ENCODE measurements at regions of chr20 and their contacts with region 1.

Region 1: GRCh38 chr20:44866703-44867335 is 18.7 kb upstream of the YWHAB start:
- DNase-seq: no peak
- H3K4me3 ChIP-seq: no peak overlapping the region
- H3K27ac ChIP-seq: no peak overlapping the region
- H3K4me1 ChIP-seq: no peaks in the 10 kb centered on the region
- H3K27me3 ChIP-seq: 0 out of 2 replicates have a peak, but pooled peaks cover 17% of the 10 kb centered on the region
- CTCF ChIP-seq: no peak

Region 2: GRCh38 chr20:44642203-44643153 is 224.3 kb before region 1 on chr20:
- CTCF ChIA-PET with region 1: interaction called, 11 read pairs
- POLR2A ChIA-PET with region 1: no interaction called
- intact Hi-C with region 1: no loop called
- DNase-seq: peak; percentile 60 to 64
- H3K4me3 ChIP-seq: no peak overlapping the region
- H3K27ac ChIP-seq: peak overlapping the region; percentile 84
- H3K4me1 ChIP-seq: peaks cover 39% of the 10 kb centered on the region
- H3K27me3 ChIP-seq: no peaks in the 10 kb centered on the region
- CTCF ChIP-seq: no peak; the same call in 1 of the 2 replicates

Region 3: GRCh38 chr20:45128071-45128470 is 261.3 kb after region 1 on chr20:
- CTCF ChIA-PET with region 1: no interaction called
- POLR2A ChIA-PET with region 1: no interaction called
- intact Hi-C with region 1: no loop called
- DNase-seq: peak; percentile 28 to 75
- H3K4me3 ChIP-seq: no peak overlapping the region
- H3K27ac ChIP-seq: no peak overlapping the region
- H3K4me1 ChIP-seq: peaks cover 13% of the 10 kb centered on the region; the same call in 1 of the 2 replicates
- H3K27me3 ChIP-seq: no peaks in the 10 kb centered on the region
- CTCF ChIP-seq: no peak